Naive thymus-derived CD4-positive, alpha-beta T cell (primary cell): ENCODE measurements at regions of chr1 and their contacts with region 1.

Region 1: DNA sequence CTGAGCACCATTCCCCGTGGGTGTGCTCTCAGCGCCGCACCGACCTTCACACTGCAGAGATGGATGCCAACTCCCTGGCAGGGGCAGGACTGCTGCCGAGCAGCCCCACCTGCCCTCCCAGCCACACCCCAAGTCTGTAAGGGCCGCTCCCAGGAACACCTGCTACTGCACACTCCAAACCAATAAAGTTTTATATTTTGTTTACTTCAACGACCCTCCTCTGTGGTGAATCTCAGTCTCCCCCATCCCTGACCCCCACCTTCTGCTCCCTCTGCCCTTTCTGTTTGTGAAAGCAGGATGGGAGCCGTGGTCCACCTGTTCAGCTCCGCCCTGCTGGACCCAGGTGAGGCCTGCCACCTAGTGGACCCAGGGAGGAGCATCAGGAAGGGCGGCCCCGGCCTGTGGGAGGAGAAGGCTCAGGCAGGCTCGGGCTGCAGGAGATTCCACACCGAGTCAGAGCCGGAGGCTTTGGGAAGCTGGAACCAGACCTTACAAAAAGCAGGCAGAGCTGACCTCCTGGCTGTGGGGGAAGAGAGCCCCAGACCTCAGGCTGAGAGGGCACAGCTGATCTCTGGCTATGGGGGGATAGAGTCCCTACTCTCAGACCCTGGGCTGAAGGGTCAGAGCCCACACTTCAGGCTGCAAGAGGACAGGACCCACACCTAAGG is 982 bp upstream of the TMEM82 start:
- DNase-seq: peak; percentile 38 to 74 (median 62)
- ATAC-seq: peak; percentile 77
- H3K4me3 ChIP-seq: no peak overlapping the region
- H3K4me3 Mint-ChIP-seq: peak overlapping the region in 1 of 10 donors; percentile 53
- H3K27ac ChIP-seq: no peak overlapping the region
- H3K27ac Mint-ChIP-seq: peak overlapping the region in 5 of 9 donors; percentile 2 to 70 (median 56)
- H3K4me1 ChIP-seq: no peaks in the 10 kb centered on the region
- H3K4me1 Mint-ChIP-seq: peaks cover 5 to 7% (median 6%) of the 10 kb centered on the region in 7 donors
- H3K27me3 ChIP-seq: no peaks in the 10 kb centered on the region
- H3K27me3 Mint-ChIP-seq: no peaks in the 10 kb centered on the region

Region 2: DNA sequence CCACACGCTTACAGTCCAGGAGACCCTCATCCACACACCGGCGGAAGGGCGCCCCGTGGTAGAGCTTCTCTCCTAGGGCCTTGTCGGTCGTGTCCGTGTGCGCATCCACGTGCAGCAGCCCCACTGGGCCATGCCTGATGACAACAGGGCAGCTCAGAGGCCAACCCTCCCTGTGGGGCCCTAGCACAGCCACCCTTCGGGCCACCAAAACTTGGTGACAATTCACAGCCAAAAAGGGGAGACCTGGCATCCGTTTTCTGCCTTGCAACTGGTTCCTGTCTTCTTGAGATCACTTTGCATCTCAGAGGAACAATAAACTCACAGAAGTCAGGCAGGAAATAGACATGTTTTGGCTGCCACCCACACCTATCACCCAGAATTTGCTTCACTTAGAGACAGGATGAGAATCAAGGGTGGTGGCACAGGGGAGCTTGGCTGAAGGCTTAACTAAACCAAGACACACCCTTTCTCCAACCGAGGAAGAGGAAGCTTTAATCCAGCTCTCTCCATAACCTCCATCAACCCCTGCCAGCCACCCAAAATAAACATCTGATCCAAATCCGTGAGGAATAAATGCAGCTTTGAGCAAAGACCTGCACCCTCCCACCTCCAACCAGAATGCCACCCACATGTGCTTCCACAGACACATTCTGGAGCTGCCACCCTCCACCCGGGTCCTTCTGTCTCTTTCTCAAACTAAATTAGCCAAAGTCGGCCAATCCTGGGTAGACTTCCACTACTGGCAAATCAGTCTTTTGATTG is 162.2 kb before region 1 on chr1:
- CTCF ChIA-PET with region 1: no interaction called
- POLR2A ChIA-PET with region 1: no interaction called
- intact Hi-C with region 1: loop called in 1 of 2 experiments (anchors 5 kb)
- DNase-seq: peak in 8 of 9 donors; percentile 32 to 83 (median 76)
- ATAC-seq: peak; percentile 89
- H3K4me3 ChIP-seq: peak overlapping the region; percentile 33
- H3K4me3 Mint-ChIP-seq: peak overlapping the region; percentile 51 to 83 (median 76)
- H3K27ac ChIP-seq: peak overlapping the region; percentile 75
- H3K27ac Mint-ChIP-seq: peak overlapping the region; percentile 91 to 99 (median 96)
- H3K4me1 ChIP-seq: peaks cover 27 to 58% of the 10 kb centered on the region in 2 donors
- H3K4me1 Mint-ChIP-seq: peaks cover 29 to 62% (median 46%) of the 10 kb centered on the region in 7 donors
- H3K27me3 ChIP-seq: no peaks in the 10 kb centered on the region
- H3K27me3 Mint-ChIP-seq: no peaks in the 10 kb centered on the region

Region 3: GRCh38 chr1:15595809-15596617 is 145.3 kb before region 1 on chr1:
- CTCF ChIA-PET with region 1: interaction called, 7 read pairs
- POLR2A ChIA-PET with region 1: no interaction called
- intact Hi-C with region 1: loop called (anchors 1 kb)
- DNase-seq: no peak
- ATAC-seq: no peak
- H3K4me3 ChIP-seq: no peak overlapping the region
- H3K4me3 Mint-ChIP-seq: no peak overlapping the region
- H3K27ac ChIP-seq: no peak overlapping the region
- H3K27ac Mint-ChIP-seq: peak overlapping the region in 1 of 9 donors; percentile 5
- H3K4me1 ChIP-seq: no peaks in the 10 kb centered on the region
- H3K4me1 Mint-ChIP-seq: peaks cover 0 to 4% (median 0%) of the 10 kb centered on the region in 7 donors
- H3K27me3 ChIP-seq: no peaks in the 10 kb centered on the region
- H3K27me3 Mint-ChIP-seq: peaks cover 0 to 9% (median 0%) of the 10 kb centered on the region in 5 donors

Region 4: DNA sequence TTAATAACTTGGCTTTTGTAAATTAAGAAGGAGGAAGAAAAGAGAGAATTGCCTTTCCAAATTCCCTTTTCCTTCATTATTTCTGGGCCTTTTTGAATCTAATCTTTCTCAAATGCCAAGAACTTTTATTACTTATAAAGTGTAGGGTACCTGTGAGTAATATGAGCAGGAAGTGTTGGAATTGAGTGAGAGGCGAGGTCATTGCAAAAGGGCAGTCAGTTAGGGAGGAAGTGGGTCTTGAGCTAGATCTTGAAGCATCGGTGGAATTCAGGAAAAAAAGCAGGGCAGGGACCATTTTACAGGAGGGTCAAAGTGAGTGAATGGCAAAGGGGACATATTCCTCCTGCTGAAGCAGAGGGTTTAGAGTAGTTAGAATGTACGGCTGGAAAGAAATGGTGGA is 100.7 kb before region 1 on chr1:
- CTCF ChIA-PET with region 1: no interaction called
- POLR2A ChIA-PET with region 1: no interaction called
- intact Hi-C with region 1: loop called in 1 of 2 experiments (anchors 2 kb)
- DNase-seq: no peak
- ATAC-seq: no peak
- H3K4me3 ChIP-seq: no peak overlapping the region
- H3K4me3 Mint-ChIP-seq: peak overlapping the region in 1 of 10 donors; percentile 8
- H3K27ac ChIP-seq: no peak overlapping the region
- H3K27ac Mint-ChIP-seq: peak overlapping the region in 3 of 9 donors; percentile 45 to 81 (median 71)
- H3K4me1 ChIP-seq: no peaks in the 10 kb centered on the region
- H3K4me1 Mint-ChIP-seq: peaks cover 0 to 7% (median 4%) of the 10 kb centered on the region in 7 donors
- H3K27me3 ChIP-seq: no peaks in the 10 kb centered on the region
- H3K27me3 Mint-ChIP-seq: no peaks in the 10 kb centered on the region

Region 5: GRCh38 chr1:16146279-16147155 is 405.2 kb after region 1 on chr1:
- CTCF ChIA-PET with region 1: no interaction called
- POLR2A ChIA-PET with region 1: no interaction called
- intact Hi-C with region 1: no loop called
- DNase-seq: no peak
- ATAC-seq: no peak
- H3K4me3 ChIP-seq: no peak overlapping the region
- H3K4me3 Mint-ChIP-seq: no peak overlapping the region
- H3K27ac ChIP-seq: no peak overlapping the region
- H3K27ac Mint-ChIP-seq: no peak overlapping the region
- H3K4me1 ChIP-seq: no peaks in the 10 kb centered on the region
- H3K4me1 Mint-ChIP-seq: peaks cover 0 to 15% (median 11%) of the 10 kb centered on the region in 7 donors
- H3K27me3 ChIP-seq: no peaks in the 10 kb centered on the region
- H3K27me3 Mint-ChIP-seq: peaks cover 0 to 3% (median 0%) of the 10 kb centered on the region in 5 donors